Activated CD4-positive, alpha-beta T cell treated with anti-CD3 and anti-CD28 coated beads, Interleukin-2, amount 10 ng/mL, durations not matched to agents 24 days and 14 days (primary cell): ENCODE measurements at regions of chr20 and their contacts with region 1.

Region 1: DNA sequence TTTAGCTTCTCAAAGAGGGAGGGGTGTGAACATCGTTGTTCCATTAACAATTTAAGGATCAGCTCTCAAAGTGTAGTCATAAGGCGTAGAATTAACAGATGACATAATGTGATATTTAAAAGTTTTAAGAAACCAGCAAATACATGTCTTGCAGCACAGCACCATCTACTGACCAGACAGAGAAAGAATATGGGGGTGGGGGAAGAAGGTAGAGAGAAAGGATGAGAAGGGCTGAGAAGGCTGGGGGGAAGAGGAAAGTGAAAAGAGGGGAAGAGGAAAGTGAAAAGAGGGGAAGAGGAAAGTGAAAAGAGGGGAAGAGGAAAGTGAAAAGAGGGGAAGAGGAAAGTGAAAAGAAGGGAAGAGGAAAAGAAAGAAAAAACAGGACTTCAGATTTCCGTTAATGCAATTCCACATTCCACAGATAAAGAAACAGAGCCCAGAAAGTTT is 80.9 kb downstream of the HAO1 start:
- DNase-seq: peak; percentile 59
- H3K4me3 Mint-ChIP-seq: no peak overlapping the region
- H3K27ac Mint-ChIP-seq: no peak overlapping the region
- H3K4me1 Mint-ChIP-seq: no peaks in the 10 kb centered on the region
- H3K27me3 Mint-ChIP-seq: no peaks in the 10 kb centered on the region

Region 2: GRCh38 chr20:6767536-6768227 is 1091.7 kb before region 1 on chr20 and contains the start of gene BMP2:
- intact Hi-C with region 1: loop called (anchors 5 kb)
- DNase-seq: peak; percentile 71
- H3K4me3 Mint-ChIP-seq: peak within 1 kb of the TSS; percentile 48
- H3K27ac Mint-ChIP-seq: no peak within 1 kb of the TSS
- H3K4me1 Mint-ChIP-seq: no peaks in the 10 kb centered on the region
- H3K27me3 Mint-ChIP-seq: peaks cover 49% of the 10 kb centered on the region
- total RNA-seq, gene BMP2: 0.09 and 0.12 TPM in 2 replicates

Region 3: DNA sequence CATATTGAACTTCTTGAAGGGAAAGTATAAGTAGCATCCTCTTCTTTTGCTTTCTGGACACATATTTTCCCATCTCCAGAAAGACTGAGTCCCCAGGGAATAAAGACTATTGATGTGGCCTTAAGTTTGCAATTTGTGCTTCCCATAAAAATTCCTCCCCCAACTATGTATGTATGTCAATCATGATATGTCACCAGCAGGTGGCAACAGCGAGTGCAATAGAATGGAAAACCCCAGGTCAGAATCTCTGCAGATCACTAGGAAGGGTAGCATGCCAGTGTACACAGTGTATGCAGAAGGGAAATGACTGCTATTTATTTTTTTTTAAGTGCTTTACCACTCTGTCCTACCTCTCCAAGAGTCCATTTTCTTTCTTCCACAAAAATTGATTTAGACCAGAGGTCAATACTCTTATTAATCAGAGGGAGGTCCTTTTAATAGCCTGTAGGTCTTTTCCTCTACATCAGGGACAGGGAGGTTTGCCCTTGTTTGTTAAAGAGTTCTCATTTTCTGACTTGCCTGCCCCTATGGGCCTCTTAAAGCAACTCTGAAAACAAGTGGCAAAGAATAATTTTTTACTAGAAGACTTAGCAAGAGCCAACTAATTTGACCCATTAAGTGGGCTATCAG is 1030.5 kb before region 1 on chr20:
- intact Hi-C with region 1: loop called (anchors 5 kb)
- DNase-seq: peak; percentile 76
- H3K4me3 Mint-ChIP-seq: no peak overlapping the region
- H3K27ac Mint-ChIP-seq: no peak overlapping the region
- H3K4me1 Mint-ChIP-seq: no peaks in the 10 kb centered on the region
- H3K27me3 Mint-ChIP-seq: no peaks in the 10 kb centered on the region